ENCODE measurements at regions of chr14 and their contacts with region 1.

Region 1: DNA sequence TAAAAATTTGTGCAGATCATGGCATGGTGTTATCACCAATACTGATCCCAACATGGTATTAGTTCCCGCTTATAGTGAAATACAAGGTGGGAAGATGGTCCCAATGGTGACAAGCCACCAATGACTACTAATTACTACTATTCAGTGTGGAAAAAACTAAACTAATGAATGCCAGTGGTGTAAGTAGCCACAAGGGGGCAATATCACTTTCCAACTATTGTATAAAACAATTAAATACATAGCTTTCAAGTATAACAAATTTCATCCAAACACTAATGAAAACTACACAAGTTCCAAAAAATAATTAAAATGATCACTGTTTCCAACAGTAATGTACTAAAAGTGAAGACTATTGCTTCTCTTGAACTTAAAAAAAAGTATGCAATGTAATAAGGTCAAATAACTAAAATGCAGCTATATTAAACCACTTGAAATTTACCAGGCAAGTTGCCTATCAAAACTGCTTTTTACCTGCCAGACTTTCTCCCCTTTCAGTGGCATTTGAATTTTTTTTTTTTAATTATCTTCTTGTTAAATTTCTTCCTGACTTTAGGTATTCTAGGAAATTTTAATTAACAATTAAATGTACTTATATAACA is 58.0 kb downstream of the PAPLN start:
- DNase-seq: no peak
- ATAC-seq: no peak

Region 2: DNA sequence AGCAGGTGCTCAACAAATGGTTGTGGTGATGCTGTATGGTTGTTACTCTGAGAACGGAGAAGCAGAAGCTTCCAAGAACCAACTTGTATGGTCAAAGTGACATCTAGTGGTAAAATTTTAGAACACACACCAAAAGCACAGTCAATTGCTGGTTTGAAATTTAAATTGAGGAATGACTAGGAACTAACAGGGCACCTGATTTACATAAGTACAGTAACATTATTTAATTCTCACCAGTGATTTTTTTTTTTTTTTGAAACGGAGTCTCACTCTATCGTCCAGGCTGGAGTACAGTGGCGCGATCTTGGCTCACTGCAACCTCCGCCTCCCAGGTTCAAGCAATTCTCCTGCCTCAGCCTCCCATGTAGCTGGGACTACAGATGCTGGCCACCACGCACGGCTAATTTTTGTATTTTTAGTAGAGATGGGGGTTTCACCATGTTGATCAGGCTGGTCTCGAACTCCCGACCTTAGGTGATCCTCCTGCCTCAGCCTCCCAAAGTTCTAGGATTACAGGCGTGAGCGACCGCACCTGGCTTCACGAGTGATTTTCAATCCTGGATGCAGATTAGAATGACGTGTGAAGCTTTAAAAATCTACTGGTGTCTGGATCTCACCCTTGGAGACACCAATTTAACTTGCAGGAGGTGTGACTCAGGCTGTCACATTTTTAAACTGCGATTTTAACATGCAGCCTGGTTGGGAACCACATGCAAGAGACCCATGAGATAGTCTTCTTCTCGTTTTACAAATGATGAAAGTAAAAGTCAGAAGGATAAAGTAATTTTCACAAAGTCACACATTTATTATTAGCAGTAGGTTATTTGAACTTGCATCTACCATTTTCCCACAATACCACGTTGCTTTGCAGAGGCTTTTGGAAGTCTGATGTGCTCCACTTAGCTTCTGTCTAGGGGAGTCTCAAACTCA is 177.2 kb after region 1 on chr14:
- intact Hi-C with region 1: loop called (anchors 2 to 5 kb)
- DNase-seq: no peak
- ATAC-seq: peak; percentile 75 to 88